ENCODE measurements at regions of chr10 and their contacts with region 1.

Region 1: DNA sequence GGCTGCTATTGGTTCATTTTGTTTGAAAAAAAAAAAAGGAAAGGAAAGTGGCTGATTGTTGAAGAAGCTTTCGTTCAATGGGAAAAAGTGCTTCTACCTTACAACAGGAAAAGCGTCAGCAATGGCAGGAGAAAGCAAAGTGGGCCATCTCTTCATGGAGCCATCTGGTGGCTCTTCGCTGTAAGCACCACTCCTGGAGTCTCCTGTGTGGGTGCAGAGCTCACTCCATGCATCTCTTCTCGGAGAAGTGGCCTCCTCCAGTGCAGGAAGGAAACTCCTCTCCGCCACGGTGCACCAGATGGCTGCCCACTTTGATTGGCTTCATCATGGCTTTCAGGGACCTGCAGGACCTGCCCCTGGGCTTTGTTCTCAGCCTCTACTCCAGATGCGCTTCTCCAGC is 250.9 kb downstream of the PTEN start:
- DNase-seq: peak; percentile 90
- H3K4me3 ChIP-seq: peak overlapping the region; percentile 33
- H3K27ac ChIP-seq: peak overlapping the region; percentile 83
- H3K4me1 ChIP-seq: peaks cover 98% of the 10 kb centered on the region
- CTCF ChIP-seq: peak; percentile 89

Region 2: DNA sequence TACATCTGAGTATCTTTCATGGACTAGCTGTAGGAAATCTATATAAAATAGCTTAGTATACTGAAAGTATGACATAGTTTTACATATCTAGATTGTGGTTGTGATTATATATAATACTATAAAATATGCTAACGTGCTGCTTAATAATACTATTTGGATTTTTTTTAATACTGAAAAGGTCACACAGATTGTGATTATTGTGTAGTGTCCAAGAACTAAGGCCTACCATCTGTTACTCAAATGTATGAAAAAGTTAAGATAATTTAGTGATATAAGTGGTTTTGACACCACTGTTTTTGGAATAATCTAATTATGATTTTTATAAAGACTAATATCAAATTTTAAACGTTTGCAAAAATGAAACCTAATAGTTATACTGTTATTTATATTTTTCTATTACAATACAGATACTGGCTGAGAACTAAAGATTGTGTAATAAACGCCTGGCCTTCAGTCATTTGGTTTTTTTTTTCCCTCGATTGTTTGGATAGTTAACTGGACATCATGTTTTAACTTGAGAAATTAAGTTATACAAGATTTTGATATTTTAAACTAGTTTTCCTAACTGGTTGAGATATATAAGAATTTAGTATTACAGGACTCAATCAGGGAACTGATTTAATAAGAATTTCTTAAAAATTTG is 238.3 kb before region 1 on chr10:
- CTCF ChIA-PET with region 1: no interaction called
- POLR2A ChIA-PET with region 1: interaction called, 11 read pairs
- intact Hi-C with region 1: no loop called
- DNase-seq: no peak
- H3K4me3 ChIP-seq: no peak overlapping the region
- H3K27ac ChIP-seq: no peak overlapping the region
- H3K4me1 ChIP-seq: peaks cover 42% of the 10 kb centered on the region
- CTCF ChIP-seq: no peak

Region 3: DNA sequence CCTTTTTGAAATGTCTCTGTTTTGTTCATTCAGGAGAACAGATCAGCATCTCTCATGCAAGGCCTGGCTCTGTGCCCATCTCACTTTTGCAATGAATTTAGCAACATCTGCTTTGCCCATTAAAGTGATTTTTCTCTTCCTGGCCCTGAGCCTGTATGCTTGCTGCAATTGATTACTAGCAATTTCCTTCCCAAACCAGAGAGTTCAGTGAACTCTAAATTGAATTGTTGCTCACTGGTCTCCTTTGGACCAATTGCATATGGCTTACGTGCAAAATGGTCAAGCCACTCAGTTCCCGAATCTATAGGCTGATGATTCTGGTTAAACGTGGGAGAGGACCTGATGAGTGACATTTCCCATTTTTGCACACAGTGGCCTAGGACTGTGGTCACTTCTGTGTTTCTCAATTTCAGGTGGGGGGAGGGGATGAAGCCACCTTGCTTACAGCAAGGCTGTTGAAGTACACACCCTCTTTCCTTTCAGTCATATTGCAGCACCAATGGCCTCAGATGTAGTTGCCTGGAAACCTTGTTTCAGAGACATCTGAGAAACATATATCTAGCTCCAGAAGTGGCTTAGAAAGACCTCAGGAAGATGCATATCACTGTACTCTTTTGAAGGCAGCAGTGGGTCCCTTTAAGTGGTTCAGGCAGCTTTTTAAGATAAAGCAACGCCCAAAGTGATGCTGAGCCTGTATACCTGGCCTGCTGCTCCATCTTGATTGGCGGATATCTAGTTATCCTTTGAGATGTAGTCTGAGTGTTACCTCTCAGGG is 49.6 kb before region 1 on chr10:
- CTCF ChIA-PET with region 1: interaction called, 3 read pairs
- POLR2A ChIA-PET with region 1: interaction called, 32 read pairs
- intact Hi-C with region 1: no loop called
- DNase-seq: no peak
- H3K4me3 ChIP-seq: no peak overlapping the region
- H3K27ac ChIP-seq: no peak overlapping the region
- H3K4me1 ChIP-seq: peaks cover 89% of the 10 kb centered on the region
- CTCF ChIP-seq: no peak

Region 4: DNA sequence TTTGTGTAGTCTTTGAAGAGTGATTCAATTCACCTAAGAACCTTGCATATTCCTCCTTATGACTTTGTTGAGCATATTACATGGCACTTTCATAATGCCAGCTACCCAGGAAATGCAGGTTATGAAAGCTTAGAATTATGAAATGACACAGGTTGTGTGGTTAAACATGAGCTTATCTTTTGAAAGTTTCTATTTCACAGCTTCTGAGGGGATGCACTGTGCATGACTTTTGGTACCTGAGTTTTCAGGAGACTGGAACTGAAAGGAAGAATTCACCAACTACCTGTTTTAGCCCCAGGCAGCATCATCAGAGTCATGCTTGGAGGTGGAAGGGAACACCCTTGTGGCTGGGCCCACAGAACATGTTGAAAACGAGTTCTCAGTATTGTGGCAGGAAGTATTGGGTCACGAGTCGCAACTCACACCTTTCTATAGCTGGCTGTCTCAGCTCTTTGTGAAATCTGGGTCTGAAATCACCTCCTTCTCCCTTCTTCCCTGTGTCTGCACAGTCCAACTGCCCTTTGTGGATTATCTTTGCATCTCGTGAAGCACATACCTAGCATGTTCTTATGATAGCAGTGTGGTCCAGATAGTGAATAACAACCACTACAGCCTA is 22.8 kb before region 1 on chr10:
- CTCF ChIA-PET with region 1: interaction called, 4 read pairs
- POLR2A ChIA-PET with region 1: interaction called, 27 read pairs
- intact Hi-C with region 1: no loop called
- DNase-seq: peak; percentile 73
- H3K4me3 ChIP-seq: no peak overlapping the region
- H3K27ac ChIP-seq: peak overlapping the region; percentile 26
- H3K4me1 ChIP-seq: peaks cover 30% of the 10 kb centered on the region
- CTCF ChIP-seq: peak; percentile 39; the same call in 1 of the 2 replicates

Region 5: DNA sequence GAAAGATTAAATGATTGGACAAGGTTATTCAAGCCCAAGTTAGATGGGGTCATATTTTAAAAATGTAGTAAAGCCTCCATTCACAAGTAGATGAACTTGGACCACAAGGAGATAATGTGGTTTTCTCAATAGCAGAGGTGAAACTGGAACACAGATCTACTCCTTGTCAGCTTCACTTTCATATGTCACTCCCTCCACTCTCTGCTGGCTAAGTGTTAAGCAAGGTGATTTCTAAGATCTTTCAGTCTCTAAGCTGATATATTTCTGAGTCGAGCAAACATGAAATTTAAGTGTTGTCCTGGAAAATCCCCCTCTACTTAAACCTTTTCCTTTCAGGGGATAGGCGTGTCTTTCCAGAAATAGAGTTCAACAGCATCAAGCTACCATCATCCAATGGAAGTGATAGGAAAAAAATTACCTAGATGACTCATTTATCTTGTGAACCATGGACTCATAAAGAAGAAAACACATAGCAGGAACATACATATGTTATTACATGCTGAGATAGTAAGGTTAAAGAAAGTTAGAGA is 24.0 kb after region 1 on chr10:
- CTCF ChIA-PET with region 1: no interaction called
- POLR2A ChIA-PET with region 1: no interaction called
- intact Hi-C with region 1: no loop called
- DNase-seq: no peak
- H3K4me3 ChIP-seq: no peak overlapping the region
- H3K27ac ChIP-seq: no peak overlapping the region
- H3K4me1 ChIP-seq: no peaks in the 10 kb centered on the region
- CTCF ChIP-seq: no peak